ENCODE measurements at regions of chr16 and their contacts with region 1.

Region 1: DNA sequence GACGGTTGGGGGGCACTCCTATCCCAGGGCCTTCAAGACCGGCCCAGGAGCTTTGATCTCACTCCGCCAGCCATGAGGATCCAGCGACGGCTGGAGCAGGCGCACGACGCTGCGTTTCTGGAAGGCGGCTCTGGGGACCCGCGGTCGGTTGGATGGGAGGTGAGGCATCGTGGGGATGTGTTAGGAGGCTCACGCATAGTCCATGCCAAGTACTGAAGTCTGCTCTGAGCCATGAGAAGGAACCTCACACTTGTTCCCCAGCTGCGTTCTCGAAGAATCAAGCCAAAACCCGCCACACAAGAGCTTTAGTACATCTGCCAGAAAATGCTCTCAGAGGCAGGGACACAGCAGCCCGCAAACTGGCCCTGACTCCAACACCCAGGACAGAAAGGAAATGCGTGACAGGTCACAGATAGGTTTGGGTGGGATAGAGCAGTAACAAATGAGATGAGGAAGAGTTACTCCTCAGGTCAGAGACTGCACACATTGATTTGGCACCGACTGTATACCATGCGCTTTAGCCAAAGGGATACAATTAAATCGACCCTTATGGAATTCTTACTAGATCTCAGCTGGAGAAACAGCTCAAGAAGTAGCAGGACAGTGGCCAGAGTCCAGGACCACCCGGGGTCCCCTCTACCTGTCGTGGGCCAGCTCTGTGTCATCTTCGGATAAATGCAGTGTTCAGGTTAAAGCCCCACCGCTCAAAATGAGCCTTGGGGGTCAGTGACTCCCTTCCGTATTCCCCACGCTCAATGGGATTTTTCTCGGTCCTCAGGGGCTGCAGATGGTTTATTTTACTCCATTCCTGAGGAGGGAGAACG is 6.7 kb upstream of the GSG1L start:
- DNase-seq: no peak
- H3K4me3 ChIP-seq: no peak overlapping the region
- H3K27ac ChIP-seq: no peak overlapping the region
- H3K4me1 ChIP-seq: no peaks in the 10 kb centered on the region
- H3K27me3 ChIP-seq: no peaks in the 10 kb centered on the region
- CTCF ChIP-seq: no peak
- POLR2A ChIP-seq: no peak

Region 2: DNA sequence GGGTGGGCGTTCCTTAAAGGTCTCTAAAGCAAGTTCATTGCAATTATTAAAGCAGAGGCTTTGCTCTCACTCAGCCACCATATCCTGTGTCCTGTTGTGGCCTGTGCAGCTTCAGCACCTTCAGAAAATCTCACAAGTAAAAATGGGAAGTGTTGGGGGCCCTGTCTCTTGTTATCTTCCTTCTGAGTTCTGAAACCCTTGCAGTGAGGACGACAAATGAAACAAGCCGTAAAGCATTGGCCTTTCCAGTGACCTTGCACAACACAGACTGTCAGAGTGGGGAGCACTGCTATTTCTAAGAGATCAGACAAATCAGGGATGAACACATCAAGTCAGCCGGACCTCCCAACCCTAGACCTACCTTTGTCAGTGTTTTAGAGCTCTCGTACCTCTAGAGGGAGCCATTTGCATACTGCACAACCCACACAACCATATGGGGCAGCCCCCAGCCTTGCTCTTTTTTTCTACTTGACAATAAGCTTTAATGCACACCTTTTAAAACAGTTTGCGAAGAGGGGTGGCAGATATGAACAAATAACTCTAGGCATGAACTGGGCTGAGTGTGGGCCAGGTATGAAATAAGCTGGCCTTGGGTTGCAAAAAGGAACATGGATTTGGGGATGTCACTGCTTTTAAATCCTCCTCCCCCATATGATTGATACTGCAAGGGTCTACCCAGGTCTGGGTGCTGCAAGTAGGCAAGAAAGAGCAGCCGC is 430.5 kb before region 1 on chr16:
- intact Hi-C with region 1: loop called (anchors 2 kb)
- DNase-seq: peak; percentile 33
- H3K4me3 ChIP-seq: no peak overlapping the region
- H3K27ac ChIP-seq: peak overlapping the region in 1 of 2 donors; percentile 59
- H3K4me1 ChIP-seq: no peaks in the 10 kb centered on the region
- H3K27me3 ChIP-seq: no peaks in the 10 kb centered on the region
- CTCF ChIP-seq: peak in 3 of 4 experiments; percentile 37 to 56 (median 48)
- POLR2A ChIP-seq: no peak

Region 3: GRCh38 chr16:27779641-27780164 is 290.5 kb before region 1 on chr16:
- intact Hi-C with region 1: loop called (anchors 1 kb)
- DNase-seq: peak; percentile 17
- H3K4me3 ChIP-seq: no peak overlapping the region
- H3K27ac ChIP-seq: no peak overlapping the region
- H3K4me1 ChIP-seq: no peaks in the 10 kb centered on the region
- H3K27me3 ChIP-seq: no peaks in the 10 kb centered on the region
- CTCF ChIP-seq: peak in 3 of 4 experiments; percentile 19 to 45 (median 42)
- POLR2A ChIP-seq: no peak

Region 4: GRCh38 chr16:27972500-27972899 is 97.7 kb before region 1 on chr16:
- intact Hi-C with region 1: loop called (anchors 5 kb)
- DNase-seq: no peak
- H3K4me3 ChIP-seq: no peak overlapping the region
- H3K27ac ChIP-seq: no peak overlapping the region
- H3K4me1 ChIP-seq: no peaks in the 10 kb centered on the region
- H3K27me3 ChIP-seq: no peaks in the 10 kb centered on the region
- CTCF ChIP-seq: peak in 1 of 4 experiments; percentile 32
- POLR2A ChIP-seq: no peak

Region 5: GRCh38 chr16:28110479-28110878 is 40.3 kb after region 1 on chr16:
- intact Hi-C with region 1: no loop called
- DNase-seq: no peak
- H3K4me3 ChIP-seq: no peak overlapping the region
- H3K27ac ChIP-seq: no peak overlapping the region
- H3K4me1 ChIP-seq: no peaks in the 10 kb centered on the region
- H3K27me3 ChIP-seq: no peaks in the 10 kb centered on the region
- CTCF ChIP-seq: no peak
- POLR2A ChIP-seq: no peak

Measured in prostate gland (tissue), 2 donors.